ENCODE measurements at regions of chr1 and their contacts with region 1.

Region 1: GRCh38 chr1:110338886-110339406 is at the start of gene RBM15:
- DNase-seq: peak; percentile 98 to 100 (median 99)
- H3K4me3 ChIP-seq: peak within 1 kb of the TSS; percentile 55 to 89
- H3K4me3 Mint-ChIP-seq: no peak within 1 kb of the TSS
- H3K27ac ChIP-seq: peak within 1 kb of the TSS; percentile 94
- H3K27ac Mint-ChIP-seq: peak within 1 kb of the TSS in 1 of 7 donors; percentile 98
- H3K4me1 ChIP-seq: peaks cover 56% of the 10 kb centered on the region
- H3K4me1 Mint-ChIP-seq: peaks cover 30 to 63% (median 52%) of the 10 kb centered on the region in 4 donors
- H3K27me3 ChIP-seq: no peaks in the 10 kb centered on the region
- H3K27me3 Mint-ChIP-seq: no peaks in the 10 kb centered on the region
- total RNA-seq, gene RBM15: 47.7 to 51.4 TPM

Region 2: GRCh38 chr1:110034451-110035235 is 304.3 kb before region 1 on chr1 and contains the start of gene STRIP1:
- CTCF ChIA-PET with region 1: interaction called, 4 read pairs
- POLR2A ChIA-PET with region 1: interaction called, 27 read pairs
- intact Hi-C with region 1: loop called (anchors 1 kb)
- DNase-seq: peak; percentile 93 to 95 (median 95)
- H3K4me3 ChIP-seq: peak within 1 kb of the TSS; percentile 74 to 80
- H3K4me3 Mint-ChIP-seq: peak within 1 kb of the TSS; percentile 93 to 98 (median 97)
- H3K27ac ChIP-seq: peak within 1 kb of the TSS; percentile 97
- H3K27ac Mint-ChIP-seq: peak within 1 kb of the TSS; percentile 83 to 98 (median 95)
- H3K4me1 ChIP-seq: peaks cover 44% of the 10 kb centered on the region
- H3K4me1 Mint-ChIP-seq: peaks cover 34 to 66% (median 48%) of the 10 kb centered on the region in 4 donors
- H3K27me3 ChIP-seq: no peaks in the 10 kb centered on the region
- H3K27me3 Mint-ChIP-seq: no peaks in the 10 kb centered on the region
- total RNA-seq, gene STRIP1: 73.3 TPM

Region 3: GRCh38 chr1:110150330-110151174 is 188.4 kb before region 1 on chr1 and contains the start of gene SLC6A17:
- CTCF ChIA-PET with region 1: no interaction called
- POLR2A ChIA-PET with region 1: no interaction called
- intact Hi-C with region 1: no loop called
- DNase-seq: no peak
- H3K4me3 ChIP-seq: no peak within 1 kb of the TSS
- H3K4me3 Mint-ChIP-seq: peak within 1 kb of the TSS in 3 of 8 donors; percentile 24 to 76 (median 41)
- H3K27ac ChIP-seq: no peak within 1 kb of the TSS
- H3K27ac Mint-ChIP-seq: no peak within 1 kb of the TSS
- H3K4me1 ChIP-seq: no peaks in the 10 kb centered on the region
- H3K4me1 Mint-ChIP-seq: peaks cover 2 to 8% (median 2%) of the 10 kb centered on the region in 4 donors
- H3K27me3 ChIP-seq: peaks cover 16% of the 10 kb centered on the region
- H3K27me3 Mint-ChIP-seq: peaks cover 38 to 43% of the 10 kb centered on the region in 2 donors
- total RNA-seq, gene SLC6A17: not detected

Region 4: GRCh38 chr1:110312188-110313121 is 26.5 kb before region 1 on chr1:
- CTCF ChIA-PET with region 1: interaction called, 17 read pairs
- POLR2A ChIA-PET with region 1: interaction called, 8 read pairs
- intact Hi-C with region 1: no loop called
- DNase-seq: peak; percentile 67 to 73 (median 70)
- H3K4me3 ChIP-seq: no peak overlapping the region
- H3K4me3 Mint-ChIP-seq: peak overlapping the region in 2 of 8 donors; percentile 32 to 57
- H3K27ac ChIP-seq: no peak overlapping the region
- H3K27ac Mint-ChIP-seq: peak overlapping the region in 2 of 7 donors; percentile 17 to 59
- H3K4me1 ChIP-seq: no peaks in the 10 kb centered on the region
- H3K4me1 Mint-ChIP-seq: peaks cover 0 to 2% (median under 1%) of the 10 kb centered on the region in 4 donors
- H3K27me3 ChIP-seq: no peaks in the 10 kb centered on the region
- H3K27me3 Mint-ChIP-seq: no peaks in the 10 kb centered on the region

Region 5: GRCh38 chr1:110412576-110412975 is 73.6 kb after region 1 on chr1:
- CTCF ChIA-PET with region 1: interaction called, 18 read pairs
- POLR2A ChIA-PET with region 1: interaction called, 60 read pairs
- intact Hi-C with region 1: loop called (anchors 1 kb)
- DNase-seq: peak; percentile 52 to 63 (median 56)
- H3K4me3 ChIP-seq: no peak overlapping the region
- H3K4me3 Mint-ChIP-seq: no peak overlapping the region
- H3K27ac ChIP-seq: no peak overlapping the region
- H3K27ac Mint-ChIP-seq: peak overlapping the region in 4 of 7 donors; percentile 5 to 84 (median 49)
- H3K4me1 ChIP-seq: peaks cover 15% of the 10 kb centered on the region
- H3K4me1 Mint-ChIP-seq: peaks cover 10 to 19% (median 13%) of the 10 kb centered on the region in 4 donors
- H3K27me3 ChIP-seq: no peaks in the 10 kb centered on the region
- H3K27me3 Mint-ChIP-seq: no peaks in the 10 kb centered on the region

Region 6: GRCh38 chr1:110879758-110880606 is 541.0 kb after region 1 on chr1:
- CTCF ChIA-PET with region 1: no interaction called
- POLR2A ChIA-PET with region 1: interaction called, 3 read pairs
- intact Hi-C with region 1: loop called (anchors 5 kb)
- DNase-seq: peak; percentile 43 to 88 (median 50)
- H3K4me3 ChIP-seq: peak overlapping the region; percentile 6 to 26
- H3K4me3 Mint-ChIP-seq: peak overlapping the region; percentile 75 to 91 (median 86)
- H3K27ac ChIP-seq: peak overlapping the region; percentile 70
- H3K27ac Mint-ChIP-seq: peak overlapping the region; percentile 92 to 99 (median 98)
- H3K4me1 ChIP-seq: peaks cover 91% of the 10 kb centered on the region
- H3K4me1 Mint-ChIP-seq: peaks cover 66 to 91% (median 78%) of the 10 kb centered on the region in 4 donors
- H3K27me3 ChIP-seq: no peaks in the 10 kb centered on the region
- H3K27me3 Mint-ChIP-seq: no peaks in the 10 kb centered on the region

Region 7: GRCh38 chr1:111203681-111204200 is 864.8 kb after region 1 on chr1:
- CTCF ChIA-PET with region 1: no interaction called
- POLR2A ChIA-PET with region 1: no interaction called
- intact Hi-C with region 1: loop called (anchors 5 kb)
- DNase-seq: peak; percentile 83 to 91 (median 86)
- H3K4me3 ChIP-seq: peak overlapping the region; percentile 18 to 65
- H3K4me3 Mint-ChIP-seq: peak overlapping the region; percentile 99 to 100 (median 100)
- H3K27ac ChIP-seq: peak overlapping the region; percentile 84
- H3K27ac Mint-ChIP-seq: peak overlapping the region; percentile 94 to 98 (median 98)
- H3K4me1 ChIP-seq: peaks cover 45% of the 10 kb centered on the region
- H3K4me1 Mint-ChIP-seq: peaks cover 46 to 83% (median 57%) of the 10 kb centered on the region in 4 donors
- H3K27me3 ChIP-seq: no peaks in the 10 kb centered on the region
- H3K27me3 Mint-ChIP-seq: no peaks in the 10 kb centered on the region

Measured in CD4-positive, alpha-beta memory T cell (primary cell).